ENCODE measurements at regions of chr10 and their contacts with region 1.

Region 1: DNA sequence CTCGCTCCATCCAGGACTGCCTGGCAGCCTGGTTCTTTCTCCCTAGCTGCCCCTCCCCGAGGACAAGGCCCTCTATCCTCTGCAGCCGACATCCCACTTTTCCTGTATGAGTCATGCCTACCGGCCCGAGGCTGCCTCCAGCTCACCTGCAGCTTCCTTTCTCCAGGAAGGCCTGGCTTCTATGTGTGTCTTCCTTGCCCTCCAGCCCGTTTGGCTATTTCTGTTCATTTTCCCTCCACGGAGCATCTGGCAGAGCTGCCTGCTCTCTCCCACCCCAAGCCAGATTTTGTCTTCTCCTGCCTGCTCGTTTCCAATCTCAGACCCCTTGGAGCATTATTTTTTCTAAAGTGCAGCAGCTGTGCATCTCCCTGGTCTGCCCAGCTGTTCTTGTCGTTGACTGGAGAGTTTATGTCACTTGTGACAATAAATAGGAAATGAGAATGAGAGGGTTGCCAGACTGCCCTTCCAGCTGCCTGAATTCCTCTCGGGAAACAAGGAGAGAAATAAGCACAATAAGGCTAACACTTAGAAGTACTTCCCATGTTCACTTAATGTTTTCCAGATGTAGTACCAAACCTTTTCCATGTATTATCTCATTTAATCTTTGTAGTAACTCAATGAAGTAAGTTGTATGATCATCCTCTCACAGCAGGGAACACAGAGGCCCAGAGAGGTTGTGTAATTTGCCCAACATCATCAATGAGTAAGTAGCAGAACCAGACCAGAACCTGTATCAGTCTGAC is 19.7 kb downstream of the UBTD1 start:
- DNase-seq: peak; percentile 64
- H3K4me3 ChIP-seq: no peak overlapping the region
- H3K27ac ChIP-seq: peak overlapping the region; percentile 56
- H3K4me1 ChIP-seq: peaks cover 28% of the 10 kb centered on the region
- H3K27me3 ChIP-seq: no peaks in the 10 kb centered on the region
- CTCF ChIP-seq: no peak
- POLR2A ChIP-seq: no peak

Region 2: GRCh38 chr10:97508342-97508741 is 10.1 kb before region 1 on chr10:
- CTCF ChIA-PET with region 1: interaction called, 6 read pairs
- POLR2A ChIA-PET with region 1: no interaction called
- dilution Hi-C with region 1: no loop called
- intact Hi-C with region 1: loop called (anchors 1 kb)
- DNase-seq: peak; percentile 78
- H3K4me3 ChIP-seq: no peak overlapping the region
- H3K27ac ChIP-seq: no peak overlapping the region
- H3K4me1 ChIP-seq: peaks cover 9% of the 10 kb centered on the region
- H3K27me3 ChIP-seq: no peaks in the 10 kb centered on the region
- CTCF ChIP-seq: no peak
- POLR2A ChIP-seq: no peak

Region 3: DNA sequence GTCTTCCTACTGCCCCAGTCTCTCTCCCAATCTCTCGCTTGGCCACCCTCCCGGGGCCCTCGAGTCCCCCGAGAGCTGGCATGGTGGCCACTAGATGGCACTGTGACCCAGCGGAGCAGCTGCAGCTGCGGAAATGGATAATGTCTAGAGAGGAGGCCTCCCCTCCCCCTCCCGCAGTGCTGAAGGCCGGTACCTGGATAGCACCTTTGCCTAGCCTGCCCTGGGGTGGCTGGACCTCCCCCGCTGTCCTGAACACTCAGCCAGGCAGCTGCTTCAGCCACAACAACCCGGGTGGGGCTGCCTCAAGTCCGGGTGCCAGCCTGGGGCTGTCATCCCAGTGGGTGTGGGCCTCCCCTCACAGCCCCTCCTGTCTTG is 396.4 kb after region 1 on chr10:
- CTCF ChIA-PET with region 1: no interaction called
- POLR2A ChIA-PET with region 1: no interaction called
- dilution Hi-C with region 1: no loop called
- intact Hi-C with region 1: no loop called
- DNase-seq: peak; percentile 52
- H3K4me3 ChIP-seq: no peak overlapping the region
- H3K27ac ChIP-seq: no peak overlapping the region
- H3K4me1 ChIP-seq: no peaks in the 10 kb centered on the region
- H3K27me3 ChIP-seq: no peaks in the 10 kb centered on the region
- CTCF ChIP-seq: peak; percentile 83 to 96
- POLR2A ChIP-seq: no peak

Measured in endothelial cell of umbilical vein (primary cell).